Activated naive CD4-positive, alpha-beta T cell treated with anti-CD3 and anti-CD28 coated beads, Interleukin-2, amount 10 ng/mL, durations not matched to agents 7 days and 5 days (primary cell): ENCODE measurements at regions of chr17 and their contacts with region 1.

Region 1: DNA sequence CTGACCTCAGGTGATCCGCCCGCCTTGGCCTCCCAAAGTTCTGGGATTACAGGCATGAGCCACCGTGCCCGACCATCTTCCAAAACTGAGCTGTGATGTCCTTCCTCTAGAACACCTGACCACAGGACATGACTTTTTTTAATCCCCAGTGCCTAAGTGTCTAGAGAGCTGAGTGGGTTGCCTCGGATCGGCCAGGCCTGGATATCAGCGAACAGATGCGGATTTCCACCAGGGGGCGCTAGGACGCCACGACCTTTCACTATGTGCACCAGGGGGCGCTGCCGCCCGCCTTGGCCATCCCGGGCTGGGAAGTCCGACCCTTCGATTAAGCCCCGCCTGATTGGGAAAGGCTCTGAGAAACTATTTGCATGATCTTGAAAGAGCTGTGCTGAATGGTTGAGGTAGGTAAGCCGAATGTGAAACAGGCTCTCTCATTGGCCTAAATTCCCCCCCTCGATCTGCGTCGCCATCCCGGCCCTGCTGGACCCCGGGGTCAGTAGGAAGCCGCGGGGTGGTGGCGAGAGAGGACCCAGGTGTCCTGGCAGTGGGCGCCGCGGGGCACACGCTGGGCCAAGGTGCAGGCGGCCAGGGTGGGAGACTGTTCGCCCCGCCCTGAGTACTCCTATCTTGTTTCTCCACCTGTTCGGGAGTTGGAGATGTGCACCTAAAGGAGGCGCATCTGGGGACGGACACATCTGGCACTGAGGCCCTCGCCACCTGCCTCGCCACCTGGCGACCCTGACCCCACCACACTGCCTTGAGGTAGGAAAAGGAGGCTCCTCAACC is at the start of gene ACBD4:
- DNase-seq: peak; percentile 97
- H3K4me3 Mint-ChIP-seq: peak within 1 kb of the TSS; percentile 91
- H3K27ac Mint-ChIP-seq: peak within 1 kb of the TSS; percentile 74
- H3K4me1 Mint-ChIP-seq: peaks cover 23% of the 10 kb centered on the region
- H3K27me3 Mint-ChIP-seq: peaks cover 16% of the 10 kb centered on the region

Region 2: GRCh38 chr17:45148183-45149036 is 13.0 kb after region 1 on chr17 and contains the start of gene HEXIM1:
- CTCF ChIA-PET with region 1: interaction called, 172 read pairs
- DNase-seq: peak; percentile 99
- H3K4me3 Mint-ChIP-seq: peak within 1 kb of the TSS; percentile 99
- H3K27ac Mint-ChIP-seq: peak within 1 kb of the TSS; percentile 100
- H3K4me1 Mint-ChIP-seq: peaks cover 56% of the 10 kb centered on the region
- H3K27me3 Mint-ChIP-seq: peaks cover 17% of the 10 kb centered on the region

Region 3: GRCh38 chr17:45172454-45173286 is 37.3 kb after region 1 on chr17:
- CTCF ChIA-PET with region 1: interaction called, 31 read pairs
- DNase-seq: peak; percentile 72
- H3K4me3 Mint-ChIP-seq: peak overlapping the region; percentile 71
- H3K27ac Mint-ChIP-seq: peak overlapping the region; percentile 91
- H3K4me1 Mint-ChIP-seq: peaks cover 26% of the 10 kb centered on the region
- H3K27me3 Mint-ChIP-seq: peaks cover 7% of the 10 kb centered on the region

Region 4: GRCh38 chr17:45190503-45191255 is 55.3 kb after region 1 on chr17:
- CTCF ChIA-PET with region 1: interaction called, 193 read pairs
- DNase-seq: no peak
- H3K4me3 Mint-ChIP-seq: no peak overlapping the region
- H3K27ac Mint-ChIP-seq: no peak overlapping the region
- H3K4me1 Mint-ChIP-seq: no peaks in the 10 kb centered on the region
- H3K27me3 Mint-ChIP-seq: peaks cover 16% of the 10 kb centered on the region

Region 5: GRCh38 chr17:45235416-45236281 is 100.3 kb after region 1 on chr17:
- CTCF ChIA-PET with region 1: interaction called, 14 read pairs
- DNase-seq: peak; percentile 86
- H3K4me3 Mint-ChIP-seq: no peak overlapping the region
- H3K27ac Mint-ChIP-seq: peak overlapping the region; percentile 84
- H3K4me1 Mint-ChIP-seq: peaks cover 52% of the 10 kb centered on the region
- H3K27me3 Mint-ChIP-seq: no peaks in the 10 kb centered on the region